ENCODE measurements at regions of chr12 and their contacts with region 1.

Region 1: DNA sequence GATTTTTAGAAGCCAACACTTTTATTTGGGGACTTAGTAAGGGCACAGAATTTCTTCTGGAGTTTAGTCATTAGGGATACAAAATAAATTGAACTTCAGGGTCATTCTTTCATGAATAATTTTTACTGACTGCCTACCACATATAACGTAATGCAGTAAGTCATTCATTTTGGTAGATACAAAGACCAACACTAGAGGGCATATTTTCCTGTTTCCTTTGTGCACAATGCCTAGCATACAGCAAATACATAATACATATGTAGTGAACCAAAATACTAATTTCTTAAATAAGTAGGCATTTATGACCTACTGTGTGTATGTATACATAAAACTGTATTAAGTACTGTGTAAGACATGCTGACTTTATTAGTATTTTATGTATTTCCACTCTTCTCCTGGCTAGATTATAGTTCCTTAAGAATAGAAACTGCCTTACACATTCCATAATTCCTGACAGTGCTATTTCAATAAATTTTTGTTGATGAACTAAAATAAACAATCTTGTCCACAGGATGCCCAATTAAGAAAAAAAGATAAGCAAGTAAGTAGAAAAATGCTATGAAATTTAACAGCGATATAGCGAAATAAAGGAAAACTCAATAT is 47.9 kb downstream of the PPP1R12A start:
- DNase-seq: no peak
- ATAC-seq: peak; percentile 79
- H3K4me3 ChIP-seq: no peak overlapping the region
- H3K4me1 ChIP-seq: peaks cover 4% of the 10 kb centered on the region
- CTCF ChIP-seq: peak; percentile 27

Region 2: GRCh38 chr12:80019691-80020090 is 132.7 kb after region 1 on chr12:
- intact Hi-C with region 1: loop called in 1 of 2 experiments (anchors 10 kb)
- DNase-seq: no peak
- ATAC-seq: no peak
- H3K4me3 ChIP-seq: no peak overlapping the region
- H3K4me1 ChIP-seq: no peaks in the 10 kb centered on the region
- CTCF ChIP-seq: no peak

Measured in mucosa of descending colon (tissue), 3 donors.